ENCODE measurements at regions of chr6 and their contacts with region 1.

Region 1: DNA sequence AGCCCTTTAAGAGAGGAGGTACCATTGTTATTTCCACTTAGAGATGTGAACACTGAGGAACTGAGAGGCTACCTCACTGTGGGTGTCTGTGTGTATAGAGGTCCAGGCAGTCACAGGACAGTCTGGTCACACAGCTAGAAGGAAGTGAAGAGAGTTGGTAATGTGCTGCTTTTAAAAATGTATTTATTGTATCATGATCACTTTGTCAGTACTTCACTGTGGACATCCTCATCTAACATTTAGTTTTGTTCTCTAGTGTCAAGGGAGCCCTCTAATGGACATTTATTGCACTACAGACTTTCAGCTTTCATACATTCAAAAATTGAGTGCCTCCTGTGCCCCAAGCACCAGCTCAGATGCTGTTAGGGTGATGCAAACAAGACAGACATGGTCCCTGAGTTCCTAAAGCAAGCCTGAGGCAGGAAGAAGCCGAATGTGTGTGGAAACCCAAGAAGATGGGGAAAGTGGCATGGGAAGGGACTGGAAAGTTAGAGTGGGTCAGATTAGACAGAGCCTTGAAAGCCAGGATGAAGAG is 123.0 kb downstream of the SLC16A10 start:
- DNase-seq: no peak
- H3K4me3 ChIP-seq: no peak overlapping the region
- H3K27ac ChIP-seq: no peak overlapping the region
- H3K4me1 ChIP-seq: no peaks in the 10 kb centered on the region
- H3K27me3 ChIP-seq: no peaks in the 10 kb centered on the region
- CTCF ChIP-seq: peak; percentile 64 to 72 (median 68)
- EP300 ChIP-seq: no peak
- POLR2A ChIP-seq: no peak

Region 2: DNA sequence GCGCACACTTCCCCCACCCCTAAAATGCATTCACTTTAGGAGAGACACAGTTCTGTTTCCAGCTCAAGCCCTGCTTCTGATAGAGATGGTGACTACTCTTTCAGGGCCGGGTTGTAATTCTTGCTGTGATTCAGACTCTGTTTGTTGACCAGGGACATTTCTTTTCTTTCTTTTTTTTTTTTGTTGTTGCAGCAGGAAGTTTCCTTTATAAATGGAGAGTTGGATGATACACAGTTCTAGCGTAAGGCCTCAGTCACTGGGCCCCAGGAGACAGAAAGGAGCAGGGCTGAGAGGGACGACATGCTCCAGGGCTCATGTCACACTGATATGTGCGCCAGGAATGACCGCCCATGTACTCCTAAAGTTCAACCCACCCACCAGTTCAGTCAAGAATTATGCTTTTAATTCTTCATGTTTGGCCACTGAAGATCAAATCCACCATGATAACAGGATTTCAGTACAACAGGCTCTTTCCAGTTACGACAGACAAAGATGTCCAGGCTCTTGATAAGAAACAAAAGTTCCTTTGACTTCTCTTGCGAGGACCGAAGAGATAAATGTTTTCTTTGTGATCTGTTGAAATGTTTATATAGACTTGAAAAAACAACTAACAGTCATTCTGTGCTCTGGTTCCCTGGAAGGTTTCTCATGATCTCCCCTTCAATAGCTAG is 1970.5 kb before region 1 on chr6:
- in situ Hi-C with region 1: no loop called
- intact Hi-C with region 1: loop called (anchors 5 kb)
- DNase-seq: no peak
- H3K4me3 ChIP-seq: no peak overlapping the region
- H3K27ac ChIP-seq: no peak overlapping the region
- H3K4me1 ChIP-seq: peaks cover 0 to 28% (median 6%) of the 10 kb centered on the region in 4 donors
- H3K27me3 ChIP-seq: no peaks in the 10 kb centered on the region
- CTCF ChIP-seq: no peak
- EP300 ChIP-seq: no peak
- POLR2A ChIP-seq: no peak

Region 3: DNA sequence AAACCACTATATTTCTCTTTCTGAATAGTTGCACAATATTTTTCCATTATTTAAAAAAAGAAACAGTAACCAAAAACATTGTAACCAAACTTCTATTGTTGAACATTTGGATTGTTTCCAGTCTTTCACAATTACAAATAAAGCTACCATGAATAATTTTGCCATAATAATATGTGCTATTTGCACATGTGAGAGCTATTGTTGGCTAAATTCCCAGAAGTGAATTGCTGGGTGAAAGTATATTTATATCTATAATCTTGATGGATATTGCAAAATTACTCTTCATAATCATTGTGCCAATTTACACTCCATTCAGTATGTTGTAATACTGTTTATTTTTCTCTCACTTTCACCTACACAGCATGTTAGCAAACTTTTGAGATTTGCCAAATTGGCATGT is 697.3 kb before region 1 on chr6:
- in situ Hi-C with region 1: loop called in 1 of 4 experiments (anchors 25 kb)
- intact Hi-C with region 1: no loop called
- DNase-seq: no peak
- H3K4me3 ChIP-seq: no peak overlapping the region
- H3K27ac ChIP-seq: no peak overlapping the region
- H3K4me1 ChIP-seq: no peaks in the 10 kb centered on the region
- H3K27me3 ChIP-seq: no peaks in the 10 kb centered on the region
- CTCF ChIP-seq: no peak
- EP300 ChIP-seq: no peak
- POLR2A ChIP-seq: no peak

Region 4: GRCh38 chr6:110528101-110528929 is 681.9 kb before region 1 on chr6:
- in situ Hi-C with region 1: loop called in 2 of 4 experiments (anchors 25 kb)
- intact Hi-C with region 1: no loop called
- DNase-seq: peak; percentile 29
- H3K4me3 ChIP-seq: no peak overlapping the region
- H3K27ac ChIP-seq: no peak overlapping the region
- H3K4me1 ChIP-seq: peaks cover 0 to 9% (median 0%) of the 10 kb centered on the region in 4 donors
- H3K27me3 ChIP-seq: no peaks in the 10 kb centered on the region
- CTCF ChIP-seq: peak; percentile 69 to 81 (median 73)
- EP300 ChIP-seq: no peak
- POLR2A ChIP-seq: no peak

Region 5: GRCh38 chr6:111011360-111012142 is 198.7 kb before region 1 on chr6:
- in situ Hi-C with region 1: no loop called
- intact Hi-C with region 1: loop called (anchors 10 kb)
- DNase-seq: no peak
- H3K4me3 ChIP-seq: no peak overlapping the region
- H3K27ac ChIP-seq: no peak overlapping the region
- H3K4me1 ChIP-seq: no peaks in the 10 kb centered on the region
- H3K27me3 ChIP-seq: no peaks in the 10 kb centered on the region
- CTCF ChIP-seq: peak; percentile 44 to 55 (median 47)
- EP300 ChIP-seq: no peak
- POLR2A ChIP-seq: no peak

Region 6: GRCh38 chr6:111057074-111057752 is 153.0 kb before region 1 on chr6:
- in situ Hi-C with region 1: loop called (anchors 5 to 25 kb)
- intact Hi-C with region 1: no loop called
- DNase-seq: peak; percentile 21
- H3K4me3 ChIP-seq: no peak overlapping the region
- H3K27ac ChIP-seq: no peak overlapping the region
- H3K4me1 ChIP-seq: no peaks in the 10 kb centered on the region
- H3K27me3 ChIP-seq: no peaks in the 10 kb centered on the region
- CTCF ChIP-seq: peak; percentile 62 to 74 (median 71)
- EP300 ChIP-seq: no peak
- POLR2A ChIP-seq: no peak